Activated T-helper 1 cell treated with anti-CD3 and anti-CD28 coated beads, Interleukin-12 subunit alpha, Interleukin-12 subunit beta, Interleukin-2, Interleukin-4 antibody, amounts not matched to agents 30 ng/mL and 10 ng/mL and 1 ng/mL, durations not matched to agents 14 hours and 24 hours and 36 hours (primary cell): ENCODE measurements at regions of chr11 and their contacts with region 1.

Region 1: DNA sequence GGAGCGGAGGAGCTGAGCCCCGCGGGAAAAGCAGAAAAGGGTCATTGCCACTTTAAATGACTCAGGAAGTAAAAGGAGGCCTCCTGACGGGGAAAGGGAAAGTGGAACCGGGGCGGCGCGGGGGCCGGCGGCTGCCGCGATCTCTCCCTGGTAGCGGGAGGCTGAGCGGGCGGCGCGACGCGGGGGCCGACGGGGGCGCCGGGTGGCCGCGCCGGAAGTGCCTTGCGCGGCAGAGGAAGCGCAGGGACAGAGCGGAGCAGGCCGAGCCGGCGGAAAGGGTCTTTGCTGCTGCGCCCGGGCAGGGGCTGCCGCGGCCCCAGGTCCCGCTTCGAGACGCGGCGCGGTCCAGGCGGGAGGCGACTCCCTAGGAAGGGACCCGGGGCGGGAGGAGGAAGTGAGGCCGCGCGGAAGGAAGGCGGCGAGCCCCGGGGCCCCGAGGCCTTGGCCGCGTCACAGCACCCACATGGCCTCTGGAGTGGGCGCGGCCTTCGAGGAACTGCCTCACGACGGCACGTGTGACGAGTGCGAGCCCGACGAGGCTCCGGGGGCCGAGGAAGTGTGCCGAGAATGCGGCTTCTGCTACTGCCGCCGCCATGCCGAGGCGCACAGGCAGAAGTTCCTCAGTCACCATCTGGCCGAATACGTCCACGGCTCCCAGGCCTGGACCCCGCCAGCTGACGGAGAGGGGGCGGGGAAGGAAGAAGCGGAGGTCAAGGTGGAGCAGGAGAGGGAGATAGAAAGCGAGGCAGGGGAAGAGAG is at the start of gene TRIM44:
- DNase-seq: peak; percentile 79
- H3K4me3 Mint-ChIP-seq: peak within 1 kb of the TSS; percentile 89
- H3K27ac Mint-ChIP-seq: peak within 1 kb of the TSS; percentile 93
- H3K4me1 Mint-ChIP-seq: peaks cover 33% of the 10 kb centered on the region
- H3K27me3 Mint-ChIP-seq: peaks cover 18% of the 10 kb centered on the region
- total RNA-seq, gene TRIM44: 24.3 and 27.6 TPM in 2 replicates

Region 2: GRCh38 chr11:33700425-33701271 is 1962.2 kb before region 1 on chr11 and contains the start of gene C11orf91:
- intact Hi-C with region 1: loop called (anchors 5 kb)
- DNase-seq: peak; percentile 94
- H3K4me3 Mint-ChIP-seq: peak within 1 kb of the TSS; percentile 84
- H3K27ac Mint-ChIP-seq: peak within 1 kb of the TSS; percentile 78
- H3K4me1 Mint-ChIP-seq: peaks cover 29% of the 10 kb centered on the region
- H3K27me3 Mint-ChIP-seq: peaks cover 22% of the 10 kb centered on the region
- total RNA-seq, gene C11orf91: 0.23 TPM in 1 of 2 replicates, not detected in the other

Region 3: GRCh38 chr11:35702126-35702525 is 39.3 kb after region 1 on chr11:
- intact Hi-C with region 1: no loop called
- DNase-seq: no peak
- H3K4me3 Mint-ChIP-seq: no peak overlapping the region
- H3K27ac Mint-ChIP-seq: no peak overlapping the region
- H3K4me1 Mint-ChIP-seq: no peaks in the 10 kb centered on the region
- H3K27me3 Mint-ChIP-seq: no peaks in the 10 kb centered on the region

Region 4: DNA sequence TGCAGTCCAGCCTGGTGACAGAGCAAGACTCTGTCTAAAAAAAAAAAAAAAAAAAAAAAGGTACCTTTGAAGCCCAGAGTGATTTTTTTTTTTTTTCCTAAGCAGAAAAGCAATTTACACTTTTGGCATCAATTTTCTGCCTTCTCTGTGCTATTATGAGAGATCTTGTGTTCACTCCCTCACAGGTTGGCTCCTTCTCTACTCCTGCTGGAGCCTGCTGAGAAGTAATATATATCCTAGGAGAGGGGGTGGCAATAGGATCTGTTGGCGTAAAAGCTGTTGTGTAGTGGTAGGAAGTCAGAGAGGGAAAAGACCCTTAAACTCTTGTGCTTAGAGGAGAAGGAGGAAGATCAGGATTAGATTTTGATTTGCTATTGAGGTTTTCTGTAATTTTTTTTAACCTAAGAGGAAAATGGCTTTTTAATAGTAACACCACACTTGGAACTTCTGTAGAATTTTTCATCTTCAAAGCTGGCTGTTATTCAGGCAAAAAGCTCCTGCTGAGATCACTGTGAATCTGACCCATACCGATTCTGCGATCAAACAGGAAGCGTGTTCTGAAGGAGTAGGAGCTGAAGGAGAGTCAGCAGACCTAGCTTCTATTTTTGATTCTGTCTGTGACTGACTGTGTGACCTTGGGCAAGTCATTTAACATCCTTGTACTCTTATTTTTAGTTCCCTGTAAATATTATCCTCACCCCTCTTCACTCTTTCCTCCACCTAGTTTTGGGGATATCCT is 77.4 kb after region 1 on chr11:
- intact Hi-C with region 1: loop called (anchors 5 kb)
- DNase-seq: no peak
- H3K4me3 Mint-ChIP-seq: no peak overlapping the region
- H3K27ac Mint-ChIP-seq: no peak overlapping the region
- H3K4me1 Mint-ChIP-seq: peaks cover 5% of the 10 kb centered on the region
- H3K27me3 Mint-ChIP-seq: no peaks in the 10 kb centered on the region

Region 5: DNA sequence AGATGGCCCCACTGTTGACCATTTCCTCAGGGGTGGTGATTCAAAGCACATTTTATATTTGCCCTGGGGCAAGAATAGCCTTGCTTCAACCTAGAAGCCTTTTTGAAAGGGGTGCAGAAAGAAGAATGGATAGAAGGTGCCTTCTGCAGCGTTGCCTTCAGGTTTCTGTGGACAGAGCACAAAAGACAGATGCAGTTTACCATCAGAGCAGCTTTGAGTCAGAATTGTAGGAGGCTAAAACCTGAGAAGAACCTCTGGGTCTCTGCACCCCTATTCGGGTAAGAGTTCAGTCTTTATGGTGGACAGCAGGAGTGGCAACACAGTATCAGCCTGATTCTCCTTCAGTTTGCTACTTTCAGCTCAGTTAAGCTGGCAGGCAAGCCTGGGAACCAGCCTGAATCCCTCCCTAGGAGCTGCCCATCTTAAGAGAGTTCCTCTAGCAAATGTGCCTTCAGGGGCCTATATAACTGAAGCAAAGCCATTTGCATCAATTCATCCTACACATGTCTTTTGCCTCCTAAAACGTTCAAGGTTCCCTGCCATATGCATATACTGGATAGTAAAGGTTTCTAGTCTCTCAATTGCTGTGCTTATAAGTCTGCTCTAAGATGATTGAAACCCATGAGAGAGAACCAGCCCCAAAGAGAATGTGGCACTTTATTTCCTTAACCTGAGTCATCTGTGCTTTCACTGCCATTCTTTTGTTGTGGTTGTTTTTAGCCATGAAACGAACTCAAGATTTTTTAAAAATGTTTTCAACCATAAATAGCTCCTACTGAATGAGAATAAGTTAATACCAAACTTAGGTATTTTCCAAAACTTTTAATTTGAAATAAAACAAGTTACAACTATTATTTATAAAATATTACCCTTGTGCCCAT is 122.7 kb after region 1 on chr11:
- intact Hi-C with region 1: loop called (anchors 5 kb)
- DNase-seq: no peak
- H3K4me3 Mint-ChIP-seq: no peak overlapping the region
- H3K27ac Mint-ChIP-seq: no peak overlapping the region
- H3K4me1 Mint-ChIP-seq: peaks cover 22% of the 10 kb centered on the region
- H3K27me3 Mint-ChIP-seq: peaks cover 3% of the 10 kb centered on the region

Region 6: GRCh38 chr11:36390963-36391471 is 728.2 kb after region 1 on chr11:
- intact Hi-C with region 1: loop called (anchors 10 kb)
- DNase-seq: no peak
- H3K4me3 Mint-ChIP-seq: peak overlapping the region; percentile 40
- H3K27ac Mint-ChIP-seq: peak overlapping the region; percentile 66
- H3K4me1 Mint-ChIP-seq: peaks cover 86% of the 10 kb centered on the region
- H3K27me3 Mint-ChIP-seq: no peaks in the 10 kb centered on the region